HEK293 (cell line): ENCODE measurements at regions of chr7 and their contacts with region 1.

Region 1: GRCh38 chr7:139016931-139017511 is 18.8 kb downstream of the ZC3HAV1L start:
- H3K4me3 ChIP-seq: no peak overlapping the region
- H3K27ac ChIP-seq: no peak overlapping the region
- H3K4me1 ChIP-seq: no peaks in the 10 kb centered on the region
- CTCF ChIP-seq: peak; percentile 75

Region 2: DNA sequence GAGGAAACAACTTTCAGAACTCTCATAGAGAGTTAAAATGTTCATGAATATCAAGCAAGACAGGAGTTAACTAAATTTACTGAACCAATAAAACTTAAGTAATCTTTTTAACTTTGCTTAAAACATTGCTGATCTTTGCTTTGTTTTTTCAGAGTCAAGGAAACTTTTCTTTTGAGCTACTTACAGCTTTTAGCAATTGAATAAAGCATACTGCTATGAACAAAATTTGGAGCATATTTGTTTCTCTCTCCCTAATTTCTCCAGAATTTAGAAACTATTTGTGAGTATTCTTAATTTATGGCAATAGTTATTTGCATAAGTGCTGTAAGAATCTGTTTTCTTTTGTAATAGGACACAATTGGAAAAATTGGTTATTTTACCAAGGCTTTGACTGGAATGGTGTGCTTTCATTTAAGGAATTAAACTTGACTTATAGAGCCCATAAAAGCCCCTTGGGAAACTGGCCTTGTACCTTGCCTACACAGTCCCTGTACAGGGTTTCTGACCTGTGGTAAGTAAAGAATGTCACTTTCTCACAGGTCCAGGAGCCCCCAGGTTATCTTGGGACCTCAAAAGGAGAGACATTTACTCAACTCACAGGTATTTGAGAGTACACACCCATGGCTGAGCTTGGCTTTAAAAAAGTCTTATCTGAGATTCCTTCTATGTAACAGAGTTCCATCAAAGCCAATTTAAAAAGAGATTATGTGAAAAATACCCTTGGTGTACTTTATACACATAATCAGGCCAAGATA is 12.5 kb before region 1 on chr7:
- CTCF ChIA-PET with region 1: interaction called, 10 read pairs
- POLR2A ChIA-PET with region 1: no interaction called
- H3K4me3 ChIP-seq: no peak overlapping the region
- H3K27ac ChIP-seq: no peak overlapping the region
- H3K4me1 ChIP-seq: no peaks in the 10 kb centered on the region
- CTCF ChIP-seq: no peak

Region 3: DNA sequence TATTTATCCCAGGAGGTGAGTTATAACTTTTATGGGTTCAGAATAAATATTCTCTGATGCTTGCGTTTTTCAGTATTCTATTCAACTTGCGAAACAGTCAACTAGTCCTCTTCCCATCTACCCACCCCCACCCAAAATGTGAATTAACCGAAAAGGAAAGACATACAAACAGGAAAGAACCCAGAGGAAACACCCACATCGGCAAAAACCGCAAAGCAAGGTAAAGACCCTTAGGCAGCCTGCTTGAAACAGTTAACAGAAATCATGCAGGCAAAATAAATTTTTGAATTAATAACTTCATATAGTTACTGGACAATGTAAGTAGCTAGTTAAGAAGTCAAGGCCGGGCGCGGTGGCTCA is 87.0 kb after region 1 on chr7:
- CTCF ChIA-PET with region 1: no interaction called
- POLR2A ChIA-PET with region 1: no interaction called
- H3K4me3 ChIP-seq: no peak overlapping the region
- H3K27ac ChIP-seq: no peak overlapping the region
- H3K4me1 ChIP-seq: no peaks in the 10 kb centered on the region
- CTCF ChIP-seq: no peak